Natural killer cell (primary cell): ENCODE measurements at regions of chr1 and their contacts with region 1.

Region 1: GRCh38 chr1:51058858-51059257 is 43.2 kb upstream of the C1orf185 start:
- DNase-seq: peak in 1 of 2 donors; percentile 49
- ATAC-seq: peak; percentile 31 to 65 (median 44)
- H3K4me3 ChIP-seq: no peak overlapping the region
- H3K4me3 Mint-ChIP-seq: no peak overlapping the region
- H3K27ac ChIP-seq: no peak overlapping the region
- H3K27ac Mint-ChIP-seq: no peak overlapping the region
- H3K4me1 ChIP-seq: no peaks in the 10 kb centered on the region
- H3K4me1 Mint-ChIP-seq: no peaks in the 10 kb centered on the region
- H3K27me3 ChIP-seq: peaks cover 2% of the 10 kb centered on the region
- H3K27me3 Mint-ChIP-seq: peaks cover 11 to 17% of the 10 kb centered on the region in 2 donors
- CTCF ChIP-seq: peak; percentile 29

Region 2: GRCh38 chr1:50774759-50775351 is 284.0 kb before region 1 on chr1:
- intact Hi-C with region 1: loop called (anchors 5 kb)
- DNase-seq: peak in 1 of 2 donors; percentile 71
- ATAC-seq: peak in 1 of 3 donors; percentile 61
- H3K4me3 ChIP-seq: no peak overlapping the region
- H3K4me3 Mint-ChIP-seq: no peak overlapping the region
- H3K27ac ChIP-seq: no peak overlapping the region
- H3K27ac Mint-ChIP-seq: no peak overlapping the region
- H3K4me1 ChIP-seq: no peaks in the 10 kb centered on the region
- H3K4me1 Mint-ChIP-seq: peaks cover 0 to 9% of the 10 kb centered on the region in 2 donors
- H3K27me3 ChIP-seq: no peaks in the 10 kb centered on the region
- H3K27me3 Mint-ChIP-seq: no peaks in the 10 kb centered on the region
- CTCF ChIP-seq: peak; percentile 82

Region 3: GRCh38 chr1:50929376-50929958 is 129.4 kb before region 1 on chr1:
- intact Hi-C with region 1: no loop called
- DNase-seq: peak in 1 of 2 donors; percentile 54
- ATAC-seq: no peak
- H3K4me3 ChIP-seq: no peak overlapping the region
- H3K4me3 Mint-ChIP-seq: no peak overlapping the region
- H3K27ac ChIP-seq: no peak overlapping the region
- H3K27ac Mint-ChIP-seq: no peak overlapping the region
- H3K4me1 ChIP-seq: no peaks in the 10 kb centered on the region
- H3K4me1 Mint-ChIP-seq: peaks cover 29 to 46% of the 10 kb centered on the region in 2 donors
- H3K27me3 ChIP-seq: no peaks in the 10 kb centered on the region
- H3K27me3 Mint-ChIP-seq: no peaks in the 10 kb centered on the region
- CTCF ChIP-seq: peak; percentile 61

Region 4: DNA sequence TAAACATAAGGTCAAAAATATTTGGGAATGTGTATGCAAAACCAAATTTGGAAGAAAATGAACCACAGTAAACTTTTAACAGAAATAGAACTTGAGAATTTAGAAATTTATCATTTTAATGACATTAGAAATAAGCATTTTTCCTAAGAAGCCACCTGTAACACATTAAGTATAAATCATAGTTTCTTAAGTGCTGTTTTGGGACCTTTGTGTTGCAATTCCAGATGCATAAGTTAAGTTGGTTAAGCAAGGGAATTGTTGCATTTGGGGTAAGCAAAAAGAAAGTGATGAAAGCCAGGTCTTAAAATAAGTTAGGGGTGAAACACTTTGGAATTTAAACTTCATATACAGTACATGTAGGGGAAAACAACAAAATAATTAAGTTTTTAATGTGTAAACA is 39.0 kb before region 1 on chr1:
- intact Hi-C with region 1: no loop called
- DNase-seq: no peak
- ATAC-seq: no peak
- H3K4me3 ChIP-seq: no peak overlapping the region
- H3K4me3 Mint-ChIP-seq: no peak overlapping the region
- H3K27ac ChIP-seq: no peak overlapping the region
- H3K27ac Mint-ChIP-seq: no peak overlapping the region
- H3K4me1 ChIP-seq: no peaks in the 10 kb centered on the region
- H3K4me1 Mint-ChIP-seq: no peaks in the 10 kb centered on the region
- H3K27me3 ChIP-seq: peaks cover 2% of the 10 kb centered on the region
- H3K27me3 Mint-ChIP-seq: peaks cover 9 to 20% of the 10 kb centered on the region in 2 donors
- CTCF ChIP-seq: no peak

Region 5: GRCh38 chr1:51192213-51192843 is 133.5 kb after region 1 on chr1:
- intact Hi-C with region 1: no loop called
- DNase-seq: peak; percentile 26 to 74
- ATAC-seq: peak; percentile 62 to 69 (median 67)
- H3K4me3 ChIP-seq: no peak overlapping the region
- H3K4me3 Mint-ChIP-seq: no peak overlapping the region
- H3K27ac ChIP-seq: no peak overlapping the region
- H3K27ac Mint-ChIP-seq: no peak overlapping the region
- H3K4me1 ChIP-seq: no peaks in the 10 kb centered on the region
- H3K4me1 Mint-ChIP-seq: no peaks in the 10 kb centered on the region
- H3K27me3 ChIP-seq: no peaks in the 10 kb centered on the region
- H3K27me3 Mint-ChIP-seq: no peaks in the 10 kb centered on the region
- CTCF ChIP-seq: peak; percentile 79